Dorsolateral prefrontal cortex (tissue), 120 donors: ENCODE measurements at regions of chr9 and their contacts with region 1.

Region 1: DNA sequence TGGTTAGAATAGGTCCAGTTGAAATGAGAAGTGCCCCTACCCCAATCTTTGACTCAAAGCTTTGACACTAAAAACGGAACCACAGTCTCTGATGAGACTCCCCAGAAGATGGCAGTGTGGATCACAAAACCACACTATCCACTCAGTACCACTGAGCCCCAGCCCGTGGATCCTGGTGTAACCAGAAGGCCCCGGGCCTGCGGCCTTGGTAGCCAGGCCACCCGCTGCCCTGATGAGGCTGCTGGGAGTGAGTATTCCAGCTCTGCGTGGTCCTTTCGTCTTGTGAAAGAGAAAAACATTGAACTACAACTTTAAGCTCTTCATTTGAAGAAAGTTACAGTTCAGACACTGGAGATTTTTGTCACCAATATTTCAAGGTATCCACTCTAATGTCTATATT is 42.2 kb upstream of the FBP1 start:
- DNase-seq: peak; percentile 70 to 88 (median 80)
- H3K4me3 ChIP-seq: peak overlapping the region in 6 of 59 donors; percentile 8 to 27 (median 23)
- H3K27ac ChIP-seq: peak overlapping the region in 45 of 59 donors; percentile 4 to 83 (median 56)
- H3K27me3 ChIP-seq: no peaks in the 10 kb centered on the region
- CTCF ChIP-seq: peak; percentile 32 to 96 (median 86)

Region 2: DNA sequence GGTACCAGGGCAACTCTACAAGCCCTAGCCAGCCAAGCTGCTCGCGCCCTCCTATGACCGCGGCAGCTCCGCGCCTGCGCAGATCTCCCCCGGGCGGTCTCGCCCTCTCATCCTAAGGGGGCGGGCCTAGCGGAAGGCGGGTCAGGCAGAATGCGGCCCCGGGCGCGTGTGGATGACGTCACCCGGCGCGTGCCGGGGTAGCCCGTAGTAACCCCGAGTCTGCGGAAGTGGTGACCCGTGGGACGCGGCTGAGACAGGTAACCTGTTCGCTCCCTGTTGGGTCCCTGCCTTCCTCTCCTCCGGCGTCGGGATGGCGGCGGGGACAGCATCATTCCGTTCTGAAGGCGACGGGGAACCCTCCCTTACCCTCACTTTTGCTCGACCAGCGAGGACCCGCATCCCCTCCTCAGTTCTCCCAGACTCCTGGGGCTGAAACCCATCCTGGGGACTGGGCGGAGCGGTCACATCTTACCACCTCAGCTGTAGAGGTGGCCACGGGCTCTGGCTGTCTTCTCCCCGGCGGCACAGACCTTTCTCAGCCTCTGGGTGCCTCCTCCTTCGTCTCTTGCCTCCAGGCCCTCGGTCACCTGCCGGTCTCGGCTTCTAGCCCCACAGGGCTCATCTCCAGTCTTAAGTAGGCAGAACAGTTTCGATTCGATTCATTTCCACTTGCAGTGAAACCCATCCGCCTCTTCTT is 45.1 kb after region 1 on chr9 and contains the start of gene AOPEP:
- intact Hi-C with region 1: loop called in 1 of 2 experiments (anchors 5 kb)
- DNase-seq: peak; percentile 96 to 98 (median 97)
- H3K4me3 ChIP-seq: peak within 1 kb of the TSS; percentile 55 to 100 (median 93)
- H3K27ac ChIP-seq: peak within 1 kb of the TSS in 58 of 59 donors; percentile 16 to 93 (median 80)
- H3K27me3 ChIP-seq: no peaks in the 10 kb centered on the region
- CTCF ChIP-seq: peak in 42 of 56 donors; percentile 7 to 67 (median 35)
- total RNA-seq, gene AOPEP: 51.7 to 157 (median 86.4) TPM

Region 3: GRCh38 chr9:94821098-94821887 is 139.8 kb after region 1 on chr9:
- intact Hi-C with region 1: no loop called
- DNase-seq: no peak
- H3K4me3 ChIP-seq: no peak overlapping the region
- H3K27ac ChIP-seq: peak overlapping the region in 35 of 59 donors; percentile 3 to 86 (median 56)
- H3K27me3 ChIP-seq: no peaks in the 10 kb centered on the region
- CTCF ChIP-seq: no peak

Region 4: GRCh38 chr9:95134457-95134881 is 453.0 kb after region 1 on chr9:
- intact Hi-C with region 1: loop called (anchors 2 kb)
- DNase-seq: no peak
- H3K4me3 ChIP-seq: no peak overlapping the region
- H3K27ac ChIP-seq: no peak overlapping the region
- H3K27me3 ChIP-seq: no peaks in the 10 kb centered on the region
- CTCF ChIP-seq: no peak